ENCODE measurements at regions of chr6 and their contacts with region 1.

Region 1: DNA sequence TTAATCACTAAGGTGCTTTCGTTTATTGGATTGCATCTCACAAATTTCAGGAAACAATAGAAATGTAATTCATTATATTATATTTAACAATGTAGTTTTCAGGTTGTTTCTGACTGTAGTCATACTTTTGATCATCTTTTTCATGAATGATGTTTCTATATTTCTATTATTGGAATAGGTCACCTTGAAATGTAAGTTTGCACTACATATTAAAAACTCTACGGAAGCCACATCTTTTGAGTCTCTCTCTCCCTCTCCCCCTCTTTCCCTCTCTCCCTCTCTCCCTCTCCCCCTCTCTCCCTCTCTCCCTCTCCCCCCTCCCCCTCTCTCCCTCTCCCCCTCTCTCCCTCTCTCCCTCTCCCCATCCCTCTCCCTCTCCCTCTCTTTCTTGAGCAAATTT is 131.3 kb upstream of the FBXL4 start:
- DNase-seq: no peak
- H3K4me3 ChIP-seq: no peak overlapping the region
- CTCF ChIP-seq: no peak

Region 2: DNA sequence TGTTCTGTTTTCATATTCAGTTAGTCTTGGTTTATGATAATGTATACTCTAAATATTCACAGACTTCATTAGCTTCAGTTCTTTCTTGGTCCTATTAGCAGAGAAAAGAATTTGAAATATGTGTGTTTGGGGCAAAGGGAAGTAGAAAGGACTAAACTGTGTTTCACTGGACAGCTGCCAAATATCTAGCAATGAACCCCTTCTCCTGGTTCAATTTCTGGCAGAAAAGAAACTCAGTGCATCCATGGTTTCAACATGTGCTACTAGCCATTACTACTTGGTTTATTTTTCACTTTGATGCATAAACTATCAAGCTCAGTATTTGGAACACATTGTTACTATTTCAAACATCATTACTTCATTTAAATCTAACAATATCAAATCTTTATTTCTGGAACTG is 175.0 kb before region 1 on chr6:
- in situ Hi-C with region 1: no loop called
- DNase-seq: peak; percentile 18
- H3K4me3 ChIP-seq: no peak overlapping the region
- CTCF ChIP-seq: no peak

Region 3: GRCh38 chr6:99016355-99016754 is 62.7 kb before region 1 on chr6:
- in situ Hi-C with region 1: no loop called
- DNase-seq: peak; percentile 88
- H3K4me3 ChIP-seq: no peak overlapping the region
- CTCF ChIP-seq: no peak

Region 4: DNA sequence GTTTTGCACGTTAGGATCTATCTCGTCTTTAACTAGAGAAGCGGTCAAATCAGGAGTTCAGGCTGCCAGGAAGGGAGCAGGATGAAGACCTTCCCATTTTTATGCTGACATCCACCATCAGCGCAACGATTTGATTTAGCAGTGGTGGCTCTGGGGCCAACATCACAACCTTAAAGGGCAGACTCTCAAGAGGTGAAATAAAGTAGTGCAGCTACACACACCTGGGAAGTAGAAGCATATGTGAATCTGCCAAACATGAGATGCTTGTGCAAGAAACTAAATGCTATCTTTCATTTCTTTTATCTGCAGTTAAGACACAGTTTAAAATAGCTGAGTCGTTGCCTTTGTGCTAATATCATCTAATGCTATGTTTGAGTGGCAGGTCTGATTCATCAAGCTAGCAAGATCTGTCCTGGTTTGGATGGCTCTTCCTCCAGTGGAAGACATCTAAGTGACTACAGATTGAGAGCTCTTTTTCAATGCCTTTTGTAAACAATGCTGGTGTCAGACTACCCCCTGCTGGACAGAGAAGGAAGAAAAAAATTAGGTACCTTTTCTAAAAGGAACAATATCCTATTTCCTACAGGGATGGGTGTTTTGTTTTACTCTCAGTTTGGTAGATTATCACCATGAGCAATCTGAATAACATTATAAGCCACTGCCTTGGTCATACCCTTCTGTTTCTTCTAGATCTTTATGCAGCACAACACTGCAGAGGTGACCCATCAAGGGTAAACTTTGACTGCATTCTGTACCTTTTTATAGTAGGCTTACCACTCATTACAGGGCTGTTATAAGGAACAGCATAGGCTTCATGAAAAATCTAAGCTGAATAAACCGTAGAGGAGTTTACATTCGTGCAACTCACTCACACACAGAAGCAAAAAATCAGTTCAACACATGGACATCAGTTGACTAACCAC is 40.3 kb after region 1 on chr6:
- in situ Hi-C with region 1: loop called (anchors 5 kb)
- DNase-seq: peak; percentile 40
- H3K4me3 ChIP-seq: no peak overlapping the region
- CTCF ChIP-seq: peak; percentile 62

Region 5: DNA sequence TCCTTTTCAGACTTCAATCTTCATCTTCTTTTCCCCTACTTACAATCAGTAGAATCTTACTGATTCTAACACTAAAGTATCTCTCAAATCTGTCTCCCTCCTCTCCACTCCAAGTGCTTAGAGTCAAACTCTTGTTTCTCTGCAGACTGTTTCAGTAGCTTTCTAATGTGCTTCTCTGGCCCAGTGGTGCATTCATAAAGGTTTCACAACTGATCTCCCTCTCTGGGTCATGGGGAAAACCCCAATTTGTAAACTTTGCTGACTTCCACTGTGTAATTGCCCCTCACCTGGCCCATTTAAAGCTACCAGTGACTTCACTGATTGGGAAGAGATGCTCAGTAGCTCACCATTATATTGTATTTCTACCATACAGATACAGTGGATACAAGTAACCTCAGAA is 86.8 kb after region 1 on chr6:
- in situ Hi-C with region 1: loop called (anchors 5 kb)
- DNase-seq: no peak
- H3K4me3 ChIP-seq: no peak overlapping the region
- CTCF ChIP-seq: no peak

Measured in astrocyte of the cerebellum (primary cell).